Activated T-helper 2 cell treated with anti-CD3 and anti-CD28 coated beads, Interferon-gamma antibody, Interleukin-2, Interleukin-4, amounts not matched to agents 10 μg/mL and 5 μg/mL and 100 μg/mL, durations not matched to agents 14 hours and 24 hours and 36 hours (primary cell): ENCODE measurements at regions of chr6 and their contacts with region 1.

Region 1: DNA sequence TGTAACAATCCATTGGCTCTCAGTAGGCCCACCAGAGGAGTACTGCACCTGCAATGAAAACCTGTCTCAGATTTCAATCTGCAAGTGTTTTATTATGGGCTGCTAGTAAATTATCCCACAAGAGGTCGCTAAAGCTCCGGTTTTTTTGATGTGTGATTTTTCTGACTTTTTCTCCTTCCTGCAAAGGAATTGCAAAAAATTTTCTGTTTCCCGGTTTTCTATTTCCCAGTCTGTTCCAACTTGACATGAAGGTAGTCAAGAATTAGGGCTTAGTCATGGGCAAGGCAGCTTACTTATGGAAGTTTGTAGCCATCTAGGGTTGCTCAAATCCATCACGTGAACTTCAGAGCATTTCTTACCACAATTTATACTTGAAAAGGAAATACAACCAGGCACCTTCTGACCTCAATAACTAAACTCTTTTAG is 38.5 kb upstream of the AHI1 start:
- DNase-seq: peak; percentile 20
- H3K4me3 Mint-ChIP-seq: peak overlapping the region; percentile 28
- H3K27ac Mint-ChIP-seq: peak overlapping the region; percentile 78
- H3K4me1 Mint-ChIP-seq: peaks cover 56% of the 10 kb centered on the region
- H3K27me3 Mint-ChIP-seq: no peaks in the 10 kb centered on the region

Region 2: DNA sequence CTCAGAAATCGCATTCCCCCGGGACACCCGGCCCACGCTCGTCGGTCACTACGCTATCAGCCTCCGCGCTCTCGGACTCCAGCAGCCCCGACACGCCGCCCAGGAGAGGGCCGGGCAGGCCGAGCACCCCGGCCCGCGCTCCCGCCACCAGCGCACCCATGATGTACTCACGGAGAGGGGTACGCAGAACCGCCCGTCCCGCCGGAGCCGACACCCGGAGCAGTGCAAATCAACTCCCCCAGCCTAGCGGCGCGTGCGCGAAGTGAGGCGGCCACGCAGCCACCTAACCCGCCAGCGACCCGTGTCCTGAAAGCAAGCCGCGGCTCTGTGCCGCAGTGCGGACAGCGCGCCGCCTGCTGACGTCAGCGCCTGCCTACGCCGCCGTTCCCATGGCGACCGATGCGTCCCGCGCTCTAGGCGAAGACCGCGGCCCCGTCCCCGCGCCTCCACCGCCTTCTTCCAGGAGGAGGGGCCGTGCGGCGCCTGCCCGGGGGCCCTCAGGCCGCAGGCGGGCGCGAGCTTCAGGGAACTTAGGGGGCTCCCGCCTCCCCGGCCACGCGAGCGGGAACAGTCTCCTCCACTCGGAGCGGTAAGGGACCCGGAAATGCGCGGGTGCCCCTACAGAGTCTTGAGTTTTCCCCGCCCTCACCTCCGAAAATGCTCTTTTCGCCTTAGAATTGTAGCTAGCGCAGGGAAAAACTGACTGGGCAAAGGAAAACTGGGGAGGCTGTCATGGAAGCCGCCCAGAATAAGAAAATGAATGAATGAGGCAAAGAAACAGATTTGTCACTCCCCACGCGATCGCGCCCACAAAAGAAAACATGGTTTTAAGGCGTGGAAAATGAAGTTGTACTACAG is 38.4 kb before region 1 on chr6 and contains the start of gene AHI1:
- intact Hi-C with region 1: loop called (anchors 1 kb)
- DNase-seq: peak; percentile 88
- H3K4me3 Mint-ChIP-seq: no peak within 1 kb of the TSS
- H3K27ac Mint-ChIP-seq: no peak within 1 kb of the TSS
- H3K4me1 Mint-ChIP-seq: peaks cover 20% of the 10 kb centered on the region
- H3K27me3 Mint-ChIP-seq: no peaks in the 10 kb centered on the region
- total RNA-seq, gene AHI1: 201 and 203 TPM in 2 replicates

Region 3: GRCh38 chr6:135577059-135577538 is 41.1 kb after region 1 on chr6:
- intact Hi-C with region 1: loop called (anchors 1 kb)
- DNase-seq: no peak
- H3K4me3 Mint-ChIP-seq: peak overlapping the region; percentile 39
- H3K27ac Mint-ChIP-seq: peak overlapping the region; percentile 99
- H3K4me1 Mint-ChIP-seq: peaks cover 57% of the 10 kb centered on the region
- H3K27me3 Mint-ChIP-seq: no peaks in the 10 kb centered on the region

Region 4: DNA sequence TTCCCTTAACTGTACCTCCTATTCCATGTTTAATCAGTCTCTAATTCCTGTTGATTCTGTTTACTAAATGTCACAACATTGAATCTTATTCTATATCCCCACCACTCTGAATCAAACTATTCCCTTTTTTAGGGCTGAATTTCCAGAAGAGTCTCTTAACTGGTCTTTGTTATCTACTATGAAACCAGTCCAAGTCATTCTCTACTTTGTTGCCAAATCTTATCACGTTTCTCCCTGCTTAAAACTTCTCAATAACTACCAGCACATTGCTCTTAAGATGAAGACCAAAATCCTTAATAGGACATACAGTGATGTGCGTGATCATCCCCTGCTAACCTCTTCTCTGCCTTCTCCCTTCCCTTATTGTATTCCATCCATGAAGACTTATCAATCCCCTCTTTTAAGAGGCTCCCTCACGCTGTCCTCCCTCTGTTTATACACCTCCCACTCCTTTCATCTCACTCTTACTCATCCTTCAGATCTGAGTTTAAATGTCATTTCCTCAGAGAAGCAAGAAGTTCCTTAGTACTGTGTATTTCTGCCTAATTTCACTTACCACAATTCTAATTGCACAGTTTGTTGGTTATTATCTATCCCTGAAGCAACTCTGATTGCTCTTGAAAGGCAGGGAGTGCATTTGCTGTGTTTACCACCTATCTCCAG is 104.6 kb after region 1 on chr6:
- intact Hi-C with region 1: loop called (anchors 1 kb)
- DNase-seq: no peak
- H3K4me3 Mint-ChIP-seq: peak overlapping the region; percentile 64
- H3K27ac Mint-ChIP-seq: peak overlapping the region; percentile 94
- H3K4me1 Mint-ChIP-seq: peaks cover 63% of the 10 kb centered on the region
- H3K27me3 Mint-ChIP-seq: no peaks in the 10 kb centered on the region

Region 5: GRCh38 chr6:135703621-135704020 is 167.6 kb after region 1 on chr6:
- intact Hi-C with region 1: loop called (anchors 5 kb)
- DNase-seq: peak; percentile 15
- H3K4me3 Mint-ChIP-seq: peak overlapping the region; percentile 35
- H3K27ac Mint-ChIP-seq: peak overlapping the region; percentile 90
- H3K4me1 Mint-ChIP-seq: peaks cover 41% of the 10 kb centered on the region
- H3K27me3 Mint-ChIP-seq: peaks cover 5% of the 10 kb centered on the region

Region 6: DNA sequence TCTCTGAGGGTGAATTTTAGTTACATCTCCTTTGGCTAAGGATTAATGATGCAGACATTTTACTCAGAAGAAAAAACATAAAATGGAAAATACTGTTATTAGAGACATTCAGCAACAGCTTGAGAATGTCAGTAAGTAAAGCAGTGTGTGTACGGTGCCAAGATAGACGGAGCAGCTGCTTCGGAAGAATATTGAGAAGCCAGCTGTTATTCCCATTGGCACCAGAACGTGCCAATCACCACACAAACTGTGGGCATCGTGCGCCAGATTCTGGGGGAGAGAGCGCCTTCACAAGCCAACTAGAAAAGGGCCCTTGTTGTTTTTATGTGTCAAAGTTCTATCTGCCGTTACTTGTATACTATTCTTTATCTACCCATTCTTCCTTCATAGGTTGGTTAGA is 550.7 kb after region 1 on chr6:
- intact Hi-C with region 1: no loop called
- DNase-seq: no peak
- H3K4me3 Mint-ChIP-seq: no peak overlapping the region
- H3K27ac Mint-ChIP-seq: no peak overlapping the region
- H3K4me1 Mint-ChIP-seq: peaks cover 22% of the 10 kb centered on the region
- H3K27me3 Mint-ChIP-seq: no peaks in the 10 kb centered on the region

Region 7: DNA sequence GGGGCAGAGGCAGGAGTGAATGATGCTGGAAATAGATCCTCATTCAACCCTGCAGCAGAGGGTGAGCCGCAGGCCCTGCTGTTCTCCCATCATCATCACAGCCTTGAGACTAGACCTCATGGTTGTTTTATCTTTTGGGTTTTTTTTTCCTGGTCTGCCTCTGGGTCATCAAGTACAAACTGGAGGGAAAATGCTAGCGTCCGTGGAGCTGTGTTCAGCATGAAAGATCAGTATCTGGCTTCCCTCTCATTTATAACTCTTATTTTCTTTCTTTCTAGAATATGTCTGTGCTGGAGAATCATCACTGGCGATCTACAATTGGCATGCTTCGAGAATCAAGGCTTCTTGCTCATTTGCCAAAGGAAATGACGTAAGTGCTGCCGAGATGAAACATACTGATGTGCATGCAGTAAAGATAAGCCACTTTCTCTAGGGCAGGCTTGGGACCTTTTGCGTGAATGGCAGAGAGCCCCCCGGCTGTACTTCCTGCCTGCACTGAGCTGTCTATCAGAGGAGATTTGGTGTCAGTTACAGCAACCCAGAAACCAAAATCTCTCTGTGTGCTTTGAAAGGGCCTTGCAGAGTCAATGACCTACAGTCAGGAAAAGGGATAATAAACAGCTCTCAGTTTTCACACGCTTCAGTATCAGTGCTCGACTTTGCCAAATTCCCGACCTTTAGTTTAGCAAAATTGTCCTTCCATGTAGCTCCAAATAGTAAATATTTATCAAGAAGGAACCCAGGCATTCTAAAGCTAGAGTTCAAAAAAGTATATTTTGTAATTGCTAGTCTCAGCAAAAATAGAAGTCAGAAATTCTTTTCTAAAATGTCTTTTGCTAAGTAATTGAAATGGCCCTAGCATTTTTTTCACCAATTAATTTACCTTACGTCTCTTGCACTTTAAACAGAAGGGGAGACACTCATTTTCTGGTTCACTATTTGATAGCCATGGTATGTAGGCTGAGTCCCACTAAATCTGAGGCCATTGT is 637.8 kb after region 1 on chr6:
- intact Hi-C with region 1: loop called (anchors 5 kb)
- DNase-seq: peak; percentile 32
- H3K4me3 Mint-ChIP-seq: peak overlapping the region; percentile 13
- H3K27ac Mint-ChIP-seq: peak overlapping the region; percentile 85
- H3K4me1 Mint-ChIP-seq: peaks cover 20% of the 10 kb centered on the region
- H3K27me3 Mint-ChIP-seq: no peaks in the 10 kb centered on the region